B cell (primary cell): ENCODE measurements at regions of chr20 and their contacts with region 1.

Region 1: DNA sequence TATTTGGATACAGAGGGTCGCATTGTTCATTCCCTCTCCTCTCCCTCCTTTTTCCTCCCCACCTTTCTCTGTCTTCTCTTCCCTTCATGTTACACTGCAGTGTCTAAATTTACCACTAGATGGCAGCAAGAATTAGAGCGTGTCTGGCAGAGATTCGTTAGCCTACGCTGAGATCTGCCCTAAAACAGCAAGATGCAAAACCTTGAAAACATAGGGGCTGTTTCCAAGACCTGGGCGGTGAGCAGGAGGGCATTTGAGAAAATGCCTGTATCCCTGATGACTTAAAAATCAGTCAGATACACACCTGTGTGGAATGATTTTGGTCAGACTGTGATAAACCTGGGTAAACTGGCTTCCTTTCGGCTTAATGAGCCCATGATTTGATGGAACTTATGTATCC is 101.5 kb upstream of the ISM1 start:
- DNase-seq: peak; percentile 57
- ATAC-seq: peak; percentile 53
- H3K4me3 ChIP-seq: no peak overlapping the region
- H3K4me3 Mint-ChIP-seq: no peak overlapping the region
- H3K27ac ChIP-seq: no peak overlapping the region
- H3K27ac Mint-ChIP-seq: no peak overlapping the region
- H3K4me1 ChIP-seq: no peaks in the 10 kb centered on the region
- H3K4me1 Mint-ChIP-seq: no peaks in the 10 kb centered on the region
- H3K27me3 ChIP-seq: no peaks in the 10 kb centered on the region
- H3K27me3 Mint-ChIP-seq: peaks cover 9% of the 10 kb centered on the region
- CTCF ChIP-seq: peak; percentile 92

Region 2: DNA sequence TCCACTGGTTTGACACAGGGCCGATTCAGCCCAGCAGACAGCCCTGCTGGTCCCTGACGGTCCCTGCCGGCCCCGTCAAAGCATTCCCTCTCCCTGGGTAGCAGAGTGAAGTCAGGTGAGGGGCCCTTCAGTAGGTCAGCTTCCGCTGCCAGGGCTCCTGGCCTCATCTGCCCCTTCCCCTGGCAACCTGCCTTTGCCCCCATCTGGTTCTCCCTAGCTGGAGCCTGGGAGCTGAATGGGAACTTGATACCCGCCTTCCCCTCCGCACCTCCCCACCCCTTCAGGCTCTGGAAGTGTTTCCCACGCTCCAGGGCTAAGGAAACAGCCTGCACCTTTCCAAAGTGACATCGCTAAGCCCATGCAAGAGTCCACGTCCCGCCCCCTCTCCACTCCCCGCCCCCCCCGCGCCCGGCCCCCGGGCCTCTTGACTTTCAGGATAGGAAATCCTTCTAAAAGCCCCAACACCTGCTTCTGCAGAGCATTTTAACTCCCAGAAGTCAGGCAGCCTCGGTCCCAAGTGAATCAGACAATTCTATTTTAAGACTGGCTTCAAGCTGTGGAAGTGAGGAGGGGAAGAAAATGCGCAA is 154.8 kb after region 1 on chr20:
- CTCF ChIA-PET with region 1: no interaction called
- POLR2A ChIA-PET with region 1: no interaction called
- intact Hi-C with region 1: no loop called
- DNase-seq: no peak
- ATAC-seq: no peak
- H3K4me3 ChIP-seq: no peak overlapping the region
- H3K4me3 Mint-ChIP-seq: no peak overlapping the region
- H3K27ac ChIP-seq: no peak overlapping the region
- H3K27ac Mint-ChIP-seq: no peak overlapping the region
- H3K4me1 ChIP-seq: no peaks in the 10 kb centered on the region
- H3K4me1 Mint-ChIP-seq: no peaks in the 10 kb centered on the region
- H3K27me3 ChIP-seq: peaks cover 0 to 2% (median 0%) of the 10 kb centered on the region in 4 experiments
- H3K27me3 Mint-ChIP-seq: peaks cover 27% of the 10 kb centered on the region
- CTCF ChIP-seq: no peak

Region 3: GRCh38 chr20:13546497-13547131 is 427.0 kb after region 1 on chr20:
- CTCF ChIA-PET with region 1: interaction called, 25 read pairs
- POLR2A ChIA-PET with region 1: no interaction called
- intact Hi-C with region 1: loop called (anchors 10 kb)
- DNase-seq: peak; percentile 55
- ATAC-seq: no peak
- H3K4me3 ChIP-seq: no peak overlapping the region
- H3K4me3 Mint-ChIP-seq: no peak overlapping the region
- H3K27ac ChIP-seq: no peak overlapping the region
- H3K27ac Mint-ChIP-seq: no peak overlapping the region
- H3K4me1 ChIP-seq: no peaks in the 10 kb centered on the region
- H3K4me1 Mint-ChIP-seq: no peaks in the 10 kb centered on the region
- H3K27me3 ChIP-seq: no peaks in the 10 kb centered on the region
- H3K27me3 Mint-ChIP-seq: no peaks in the 10 kb centered on the region
- CTCF ChIP-seq: peak; percentile 81

Region 4: GRCh38 chr20:13784893-13785715 is 665.5 kb after region 1 on chr20 and contains the starts of genes ESF1 and NDUFAF5:
- CTCF ChIA-PET with region 1: interaction called, 6 read pairs
- POLR2A ChIA-PET with region 1: no interaction called
- intact Hi-C with region 1: loop called (anchors 5 kb)
- DNase-seq: peak; percentile 95
- ATAC-seq: peak; percentile 98
- H3K4me3 ChIP-seq: peak within 1 kb of the TSS; percentile 68 to 91 (median 85)
- H3K4me3 Mint-ChIP-seq: peak within 1 kb of the TSS; percentile 98
- H3K27ac ChIP-seq: peak within 1 kb of the TSS; percentile 85 to 91
- H3K27ac Mint-ChIP-seq: peak within 1 kb of the TSS; percentile 96
- H3K4me1 ChIP-seq: peaks cover 19 to 23% of the 10 kb centered on the region in 2 donors
- H3K4me1 Mint-ChIP-seq: peaks cover 49% of the 10 kb centered on the region
- H3K27me3 ChIP-seq: no peaks in the 10 kb centered on the region
- H3K27me3 Mint-ChIP-seq: no peaks in the 10 kb centered on the region
- CTCF ChIP-seq: no peak
- total RNA-seq, gene ESF1: 13.8 and 13.9 TPM in 2 replicates
- total RNA-seq, gene NDUFAF5: 28.8 and 32.3 TPM in 2 replicates

Region 5: GRCh38 chr20:14055127-14055742 is 935.7 kb after region 1 on chr20:
- CTCF ChIA-PET with region 1: interaction called, 18 read pairs
- POLR2A ChIA-PET with region 1: no interaction called
- intact Hi-C with region 1: no loop called
- DNase-seq: peak; percentile 51
- ATAC-seq: no peak
- H3K4me3 ChIP-seq: no peak overlapping the region
- H3K4me3 Mint-ChIP-seq: no peak overlapping the region
- H3K27ac ChIP-seq: no peak overlapping the region
- H3K27ac Mint-ChIP-seq: no peak overlapping the region
- H3K4me1 ChIP-seq: no peaks in the 10 kb centered on the region
- H3K4me1 Mint-ChIP-seq: no peaks in the 10 kb centered on the region
- H3K27me3 ChIP-seq: no peaks in the 10 kb centered on the region
- H3K27me3 Mint-ChIP-seq: no peaks in the 10 kb centered on the region
- CTCF ChIP-seq: peak; percentile 89